MCF 10A (cell line): ENCODE measurements at regions of chr4 and their contacts with region 1.

Region 1: DNA sequence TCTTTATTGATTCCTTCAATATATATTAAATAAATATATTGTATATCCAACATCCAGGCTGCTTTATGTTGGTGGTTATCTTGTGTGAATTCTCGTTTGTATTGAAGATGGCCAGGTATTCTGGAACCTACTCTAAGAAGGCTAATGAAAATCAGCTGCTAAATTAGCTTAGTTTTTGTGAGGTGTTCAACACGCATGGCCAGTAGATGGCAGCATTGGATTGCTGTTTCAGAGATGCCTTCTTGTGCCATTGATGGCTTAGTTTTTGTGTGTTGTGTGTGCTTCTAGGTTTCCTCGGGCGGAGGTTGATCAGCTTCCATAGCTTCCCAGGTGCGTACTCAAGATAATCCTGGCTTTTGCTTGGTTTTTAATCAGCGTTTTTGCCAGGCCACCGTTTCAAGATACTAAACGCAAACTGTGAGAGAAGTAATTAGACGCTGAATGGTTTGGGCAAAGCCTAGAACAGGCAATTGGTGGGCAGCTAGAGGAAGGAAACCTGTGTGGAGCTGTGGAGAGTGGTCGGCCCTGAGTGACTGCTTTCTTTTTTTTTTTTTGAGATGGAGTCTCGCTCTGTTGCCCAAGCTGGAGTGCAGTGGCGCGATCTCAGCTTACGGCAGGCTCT is 15.1 kb downstream of the NOCT start:
- DNase-seq: peak; percentile 85
- H3K4me3 Mint-ChIP-seq: no peak overlapping the region
- H3K27ac Mint-ChIP-seq: no peak overlapping the region
- H3K4me1 Mint-ChIP-seq: peaks cover 11% of the 10 kb centered on the region
- H3K27me3 Mint-ChIP-seq: no peaks in the 10 kb centered on the region
- CTCF ChIP-seq: peak; percentile 70

Region 2: DNA sequence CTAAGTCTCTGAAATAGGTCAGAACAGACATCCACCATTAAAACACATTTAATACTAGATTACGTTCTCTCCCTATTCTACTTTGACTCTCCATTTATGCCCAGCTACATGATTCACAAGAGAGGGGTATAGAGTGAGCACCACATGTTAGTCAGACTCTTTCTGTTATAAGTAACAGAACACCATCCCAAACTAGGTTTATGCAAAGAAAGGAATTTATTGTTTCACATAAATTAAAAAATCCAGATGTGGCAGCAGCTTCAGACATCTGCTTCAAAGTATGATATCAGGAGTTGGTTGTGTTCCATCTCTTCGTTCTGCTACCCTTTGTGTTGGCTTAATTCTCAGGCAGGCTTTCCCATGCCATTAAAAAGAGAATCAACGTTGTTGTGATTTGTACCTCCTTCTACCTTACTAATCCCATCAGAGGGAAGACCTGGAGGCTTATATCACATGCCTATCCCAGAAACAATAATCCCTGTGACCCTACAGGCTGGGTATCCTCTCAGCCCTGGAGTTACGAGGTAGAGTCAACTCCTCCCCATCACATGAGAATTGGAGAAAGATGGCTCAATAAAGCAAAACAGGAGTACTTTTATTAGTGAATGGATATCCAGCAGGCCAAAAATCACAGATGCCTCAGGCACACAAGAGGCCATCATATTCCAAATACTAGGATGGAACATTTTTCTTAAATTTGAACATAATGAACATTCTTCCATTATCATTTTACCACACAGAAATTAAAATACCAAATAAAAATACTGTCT is 951.8 kb before region 1 on chr4:
- CTCF ChIA-PET with region 1: no interaction called
- POLR2A ChIA-PET with region 1: no interaction called
- intact Hi-C with region 1: no loop called
- DNase-seq: no peak
- H3K4me3 Mint-ChIP-seq: no peak overlapping the region
- H3K27ac Mint-ChIP-seq: no peak overlapping the region
- H3K4me1 Mint-ChIP-seq: no peaks in the 10 kb centered on the region
- H3K27me3 Mint-ChIP-seq: no peaks in the 10 kb centered on the region
- CTCF ChIP-seq: no peak

Region 3: DNA sequence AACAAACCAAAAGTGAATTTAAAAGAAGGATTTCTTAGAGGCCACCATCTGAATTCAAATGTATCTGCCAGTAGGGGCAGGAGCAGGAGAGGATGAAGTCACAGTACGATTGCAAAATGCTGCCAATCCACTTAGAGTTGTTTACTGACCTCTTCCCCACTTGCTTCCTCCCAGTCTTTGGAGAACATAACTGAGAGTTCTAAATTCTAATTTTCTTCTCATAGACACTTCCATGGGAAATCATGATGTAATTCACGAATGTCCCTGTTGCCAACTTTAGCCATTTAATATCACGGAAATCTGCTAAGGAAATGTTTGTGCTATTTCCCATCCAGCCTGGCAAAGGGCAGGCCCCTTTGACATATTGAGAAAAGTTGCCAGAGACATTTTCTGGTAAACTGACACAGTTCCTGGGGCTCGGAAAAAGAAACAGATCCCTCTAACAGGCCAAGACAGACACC is 48.8 kb before region 1 on chr4:
- CTCF ChIA-PET with region 1: no interaction called
- POLR2A ChIA-PET with region 1: no interaction called
- intact Hi-C with region 1: no loop called
- DNase-seq: peak; percentile 69
- H3K4me3 Mint-ChIP-seq: no peak overlapping the region
- H3K27ac Mint-ChIP-seq: peak overlapping the region; percentile 77
- H3K4me1 Mint-ChIP-seq: peaks cover 5% of the 10 kb centered on the region
- H3K27me3 Mint-ChIP-seq: no peaks in the 10 kb centered on the region
- CTCF ChIP-seq: no peak

Region 4: DNA sequence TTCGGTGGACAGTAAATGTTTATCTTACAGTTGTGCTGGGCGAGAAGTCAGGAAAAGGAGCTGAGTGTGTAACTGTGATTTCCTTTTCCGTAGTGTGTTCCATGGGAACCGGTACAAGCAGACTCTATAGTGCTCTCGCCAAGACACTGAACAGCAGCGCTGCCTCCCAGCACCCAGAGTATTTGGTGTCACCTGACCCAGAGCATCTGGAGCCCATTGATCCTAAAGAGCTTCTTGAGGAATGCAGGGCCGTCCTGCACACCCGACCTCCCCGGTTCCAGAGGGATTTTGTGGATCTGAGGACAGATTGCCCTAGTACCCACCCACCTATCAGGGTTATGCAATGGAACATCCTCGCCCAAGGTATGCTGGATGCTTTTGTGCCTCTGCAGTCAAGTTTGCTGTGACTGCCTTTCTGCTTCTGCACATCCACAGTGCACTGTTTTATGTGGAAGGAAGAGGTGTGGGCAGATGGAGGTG is 12.3 kb after region 1 on chr4:
- CTCF ChIA-PET with region 1: interaction called, 58 read pairs
- POLR2A ChIA-PET with region 1: interaction called, 4 read pairs
- intact Hi-C with region 1: no loop called
- DNase-seq: no peak
- H3K4me3 Mint-ChIP-seq: no peak overlapping the region
- H3K27ac Mint-ChIP-seq: no peak overlapping the region
- H3K4me1 Mint-ChIP-seq: no peaks in the 10 kb centered on the region
- H3K27me3 Mint-ChIP-seq: no peaks in the 10 kb centered on the region
- CTCF ChIP-seq: no peak

Region 5: GRCh38 chr4:139076016-139076744 is 45.5 kb after region 1 on chr4:
- CTCF ChIA-PET with region 1: interaction called, 27 read pairs
- POLR2A ChIA-PET with region 1: interaction called, 22 read pairs
- intact Hi-C with region 1: no loop called
- DNase-seq: no peak
- H3K4me3 Mint-ChIP-seq: no peak overlapping the region
- H3K27ac Mint-ChIP-seq: no peak overlapping the region
- H3K4me1 Mint-ChIP-seq: peaks cover 3% of the 10 kb centered on the region
- H3K27me3 Mint-ChIP-seq: no peaks in the 10 kb centered on the region
- CTCF ChIP-seq: no peak

Region 6: DNA sequence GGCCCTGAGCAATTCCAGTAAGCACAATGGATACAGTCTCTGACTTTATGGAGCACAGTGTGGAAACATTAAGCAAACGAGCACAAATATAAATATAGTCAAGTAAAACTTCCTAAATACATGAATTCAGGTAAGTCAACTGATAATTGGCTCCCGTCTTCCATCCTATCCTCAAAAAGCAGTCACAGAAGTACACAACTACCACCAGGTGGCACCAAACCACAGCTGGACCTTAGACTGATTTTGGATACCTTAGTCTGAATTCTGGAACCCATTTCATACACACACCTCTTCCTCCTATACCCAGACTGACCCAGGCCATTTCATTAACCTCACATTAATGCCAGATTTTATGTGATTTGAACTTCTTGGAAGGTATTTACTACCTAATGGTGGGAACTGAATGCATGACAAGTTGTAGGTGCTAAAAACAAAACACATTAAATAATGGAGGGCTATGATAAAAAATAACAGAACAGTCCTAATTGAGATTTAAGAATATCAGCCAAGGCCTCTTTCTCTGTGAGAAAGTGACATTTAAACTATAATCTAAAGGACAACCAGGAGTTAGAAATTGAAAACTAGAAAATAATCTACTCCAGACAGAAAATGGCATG is 68.7 kb after region 1 on chr4:
- CTCF ChIA-PET with region 1: interaction called, 9 read pairs
- POLR2A ChIA-PET with region 1: no interaction called
- intact Hi-C with region 1: loop called (anchors 1 kb)
- DNase-seq: peak; percentile 92
- H3K4me3 Mint-ChIP-seq: no peak overlapping the region
- H3K27ac Mint-ChIP-seq: no peak overlapping the region
- H3K4me1 Mint-ChIP-seq: peaks cover 6% of the 10 kb centered on the region
- H3K27me3 Mint-ChIP-seq: no peaks in the 10 kb centered on the region
- CTCF ChIP-seq: peak; percentile 80

Region 7: DNA sequence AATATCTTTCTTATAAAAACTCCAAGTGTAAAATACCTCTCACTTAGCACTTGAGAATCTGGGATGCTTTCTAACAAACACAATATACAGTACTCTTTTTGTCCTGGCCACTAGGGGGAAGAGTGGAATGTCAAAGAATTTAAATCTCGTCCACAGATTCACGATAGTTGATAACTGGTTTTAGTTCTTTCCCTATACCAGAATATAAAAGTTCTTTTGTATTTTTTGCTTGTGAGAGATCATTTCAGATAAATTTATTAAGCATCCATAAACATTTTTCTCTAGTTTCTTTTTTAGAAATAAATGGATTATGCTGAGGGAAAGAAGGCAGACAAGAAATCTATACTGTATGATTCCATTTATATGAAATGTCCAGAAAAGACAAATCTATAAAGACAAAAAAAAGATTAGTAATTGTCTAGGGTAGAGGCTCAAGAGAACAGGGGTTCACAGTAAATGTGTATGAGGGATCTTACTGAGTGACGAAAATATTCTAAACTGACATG is 198.9 kb after region 1 on chr4:
- CTCF ChIA-PET with region 1: interaction called, 8 read pairs
- POLR2A ChIA-PET with region 1: no interaction called
- intact Hi-C with region 1: loop called (anchors 5 kb)
- DNase-seq: peak; percentile 72
- H3K4me3 Mint-ChIP-seq: no peak overlapping the region
- H3K27ac Mint-ChIP-seq: no peak overlapping the region
- H3K4me1 Mint-ChIP-seq: no peaks in the 10 kb centered on the region
- H3K27me3 Mint-ChIP-seq: no peaks in the 10 kb centered on the region
- CTCF ChIP-seq: peak; percentile 62